Common myeloid progenitor, CD34-positive (primary cell): ENCODE measurements at regions of chr7 and their contacts with region 1.

Region 1: GRCh38 chr7:134432296-134433152 is 26.4 kb downstream of the AKR1B1 start:
- DNase-seq: peak; percentile 88 to 93 (median 91)
- H3K4me3 ChIP-seq: peak overlapping the region; percentile 15 to 76 (median 50)
- H3K27ac ChIP-seq: no peak overlapping the region
- H3K4me1 ChIP-seq: peaks cover 0 to 12% (median 9%) of the 10 kb centered on the region in 4 experiments
- H3K27me3 ChIP-seq: no peaks in the 10 kb centered on the region

Region 2: GRCh38 chr7:134444198-134444871 is 11.8 kb after region 1 on chr7:
- CTCF ChIA-PET with region 1: interaction called, 25 read pairs
- POLR2A ChIA-PET with region 1: no interaction called
- DNase-seq: no peak
- H3K4me3 ChIP-seq: no peak overlapping the region
- H3K27ac ChIP-seq: no peak overlapping the region
- H3K4me1 ChIP-seq: peaks cover 0 to 18% (median 16%) of the 10 kb centered on the region in 4 experiments
- H3K27me3 ChIP-seq: no peaks in the 10 kb centered on the region

Region 3: DNA sequence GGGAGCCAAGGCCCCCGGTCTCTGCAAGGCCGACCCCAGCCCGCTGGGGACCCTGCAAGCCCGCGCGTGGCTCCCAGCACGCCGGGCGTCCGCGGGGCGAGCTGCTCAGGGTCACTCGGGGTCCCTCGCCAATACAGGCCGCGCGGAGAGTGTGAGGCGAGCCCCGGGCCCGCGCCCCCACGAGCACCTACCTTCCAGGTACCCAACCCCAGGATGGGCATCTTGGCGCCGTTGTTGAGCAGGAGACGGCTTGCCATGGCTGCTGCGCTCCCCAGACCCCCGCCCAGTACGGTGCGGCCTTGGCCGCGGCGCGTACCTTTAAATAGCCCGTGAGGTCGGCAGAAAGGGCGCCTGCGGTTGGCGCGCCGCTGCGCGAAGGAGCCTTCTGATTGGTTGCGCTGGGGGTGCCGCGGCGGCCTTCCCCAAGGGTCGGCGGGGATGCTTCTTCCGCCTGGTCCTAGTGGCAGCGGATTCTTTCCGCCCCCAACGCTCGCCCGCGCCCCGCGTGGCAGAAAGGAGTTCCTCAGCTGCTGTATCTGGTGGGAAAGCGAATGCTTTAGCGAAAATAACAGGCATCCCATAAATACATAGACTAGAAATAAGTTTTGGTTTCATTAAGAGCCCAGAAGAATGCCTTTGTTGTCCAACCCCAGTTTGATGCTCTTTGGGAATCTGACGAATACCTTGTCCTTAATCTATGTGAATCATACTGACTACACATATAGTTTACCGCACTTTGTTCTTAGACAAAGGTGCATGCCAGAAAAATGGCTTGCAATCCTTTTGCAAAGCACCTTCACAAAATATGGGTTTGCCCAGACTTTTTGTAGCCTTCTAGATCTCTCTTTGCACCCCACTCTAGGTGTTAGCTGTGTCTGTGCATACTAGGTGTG is 26.5 kb after region 1 on chr7 and contains the start of gene AKR1B1:
- CTCF ChIA-PET with region 1: interaction called, 34 read pairs
- POLR2A ChIA-PET with region 1: interaction called, 4 read pairs
- DNase-seq: peak; percentile 94 to 98 (median 97)
- H3K4me3 ChIP-seq: peak within 1 kb of the TSS; percentile 68 to 88 (median 84)
- H3K27ac ChIP-seq: peak within 1 kb of the TSS in 1 of 2 experiments; percentile 61
- H3K4me1 ChIP-seq: peaks cover 7 to 27% (median 17%) of the 10 kb centered on the region in 4 experiments
- H3K27me3 ChIP-seq: no peaks in the 10 kb centered on the region

Region 4: DNA sequence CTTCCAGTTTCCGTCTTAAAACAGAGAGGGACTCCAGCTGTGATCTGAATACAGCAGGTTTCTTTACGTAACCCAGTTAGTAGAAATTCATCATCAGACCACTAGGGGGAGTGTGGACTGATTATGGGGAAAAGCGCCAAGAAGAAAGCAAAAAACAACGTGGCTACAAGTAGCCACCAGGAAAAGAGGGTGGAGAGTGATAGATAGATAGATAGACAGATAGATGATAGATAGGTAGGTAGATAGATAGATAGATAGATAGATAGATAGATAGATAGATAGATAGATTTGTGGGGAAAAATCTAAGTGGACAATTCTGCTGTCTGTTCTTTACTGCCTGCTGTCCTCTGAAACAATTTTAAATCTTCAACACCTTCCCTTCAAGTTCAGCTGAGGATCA is 82.1 kb after region 1 on chr7:
- CTCF ChIA-PET with region 1: interaction called, 96 read pairs
- POLR2A ChIA-PET with region 1: no interaction called
- DNase-seq: peak; percentile 71 to 84 (median 77)
- H3K4me3 ChIP-seq: no peak overlapping the region
- H3K27ac ChIP-seq: no peak overlapping the region
- H3K4me1 ChIP-seq: no peaks in the 10 kb centered on the region
- H3K27me3 ChIP-seq: peaks cover 0 to 5% (median 2%) of the 10 kb centered on the region in 5 experiments

Region 5: DNA sequence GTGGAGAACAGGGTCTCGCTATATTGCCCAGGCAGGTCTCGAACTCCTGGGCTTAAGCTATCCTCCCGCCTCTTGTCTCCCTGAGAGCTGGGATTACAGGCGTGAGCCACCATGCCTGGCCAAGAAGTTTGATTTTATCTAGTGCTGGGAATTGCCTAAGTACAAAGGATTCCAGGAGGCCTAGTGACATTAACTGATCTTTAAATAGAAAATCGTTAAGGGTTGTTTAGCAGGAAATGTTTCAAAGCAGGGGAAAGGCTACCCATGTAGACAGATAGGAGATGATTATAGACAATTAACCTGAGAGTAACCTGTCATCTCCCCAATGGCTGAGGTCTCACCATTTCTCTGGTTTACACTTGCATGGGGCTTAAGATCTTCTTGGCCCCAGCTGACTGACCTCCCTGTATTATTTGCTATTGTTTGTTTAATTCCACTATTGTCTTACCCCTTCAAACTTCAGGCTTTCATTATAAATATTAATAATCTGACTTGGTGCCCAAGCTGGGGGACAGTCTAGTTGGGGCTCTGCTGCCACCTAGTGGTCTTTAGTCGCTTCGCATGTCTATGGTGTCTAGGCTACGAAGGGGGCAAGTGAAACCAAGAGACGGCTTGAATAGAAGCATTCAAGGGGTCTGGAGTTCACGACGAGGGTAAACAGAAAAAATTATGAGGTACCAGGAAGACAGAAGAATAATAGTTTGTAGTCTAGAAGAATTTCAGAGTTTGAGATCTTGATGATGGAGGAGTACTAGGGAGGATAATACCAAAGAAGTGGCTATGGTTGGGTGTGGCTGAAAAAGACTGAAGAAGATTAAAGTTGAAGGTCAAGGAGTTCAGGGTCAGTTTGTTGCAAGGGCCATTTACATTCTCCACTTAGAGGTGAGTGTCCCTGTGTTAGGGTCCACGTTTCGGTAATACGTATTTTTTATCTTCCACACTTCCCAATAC is 173.7 kb after region 1 on chr7:
- CTCF ChIA-PET with region 1: interaction called, 11 read pairs
- POLR2A ChIA-PET with region 1: no interaction called
- DNase-seq: peak; percentile 65 to 85 (median 73)
- H3K4me3 ChIP-seq: peak overlapping the region in 2 of 7 experiments; percentile 25 to 47
- H3K27ac ChIP-seq: no peak overlapping the region
- H3K4me1 ChIP-seq: peaks cover 0 to 3% (median 0%) of the 10 kb centered on the region in 4 experiments
- H3K27me3 ChIP-seq: peaks cover 0 to 6% (median 4%) of the 10 kb centered on the region in 5 experiments